Panc1 (cell line): ENCODE measurements at regions of chr6 and their contacts with region 1.

Region 1: GRCh38 chr6:10144772-10145171 is 270.1 kb downstream of the TFAP2A start:
- DNase-seq: no peak
- ATAC-seq: no peak
- H3K4me3 ChIP-seq: no peak overlapping the region
- H3K27ac ChIP-seq: no peak overlapping the region
- H3K4me1 ChIP-seq: peaks cover 8% of the 10 kb centered on the region
- H3K27me3 ChIP-seq: no peaks in the 10 kb centered on the region
- CTCF ChIP-seq: no peak

Region 2: GRCh38 chr6:8243475-8243874 is 1901.3 kb before region 1 on chr6:
- CTCF ChIA-PET with region 1: no interaction called
- POLR2A ChIA-PET with region 1: interaction called, 15 read pairs
- in situ Hi-C with region 1: no loop called
- intact Hi-C with region 1: no loop called
- DNase-seq: no peak
- ATAC-seq: no peak
- H3K4me3 ChIP-seq: no peak overlapping the region
- H3K27ac ChIP-seq: no peak overlapping the region
- H3K4me1 ChIP-seq: no peaks in the 10 kb centered on the region; the same call in 1 of the 2 replicates
- H3K27me3 ChIP-seq: peaks cover 8% of the 10 kb centered on the region; the same call in 1 of the 2 replicates
- CTCF ChIP-seq: no peak

Region 3: GRCh38 chr6:9699888-9700287 is 444.9 kb before region 1 on chr6:
- CTCF ChIA-PET with region 1: no interaction called
- POLR2A ChIA-PET with region 1: no interaction called
- in situ Hi-C with region 1: no loop called
- intact Hi-C with region 1: no loop called
- DNase-seq: no peak
- ATAC-seq: no peak
- H3K4me3 ChIP-seq: no peak overlapping the region
- H3K27ac ChIP-seq: no peak overlapping the region
- H3K4me1 ChIP-seq: no peaks in the 10 kb centered on the region
- H3K27me3 ChIP-seq: no peaks in the 10 kb centered on the region
- CTCF ChIP-seq: no peak